Cardiac septum (tissue), 1 donor: ENCODE measurements at regions of chr11 and their contacts with region 1.

Region 1: DNA sequence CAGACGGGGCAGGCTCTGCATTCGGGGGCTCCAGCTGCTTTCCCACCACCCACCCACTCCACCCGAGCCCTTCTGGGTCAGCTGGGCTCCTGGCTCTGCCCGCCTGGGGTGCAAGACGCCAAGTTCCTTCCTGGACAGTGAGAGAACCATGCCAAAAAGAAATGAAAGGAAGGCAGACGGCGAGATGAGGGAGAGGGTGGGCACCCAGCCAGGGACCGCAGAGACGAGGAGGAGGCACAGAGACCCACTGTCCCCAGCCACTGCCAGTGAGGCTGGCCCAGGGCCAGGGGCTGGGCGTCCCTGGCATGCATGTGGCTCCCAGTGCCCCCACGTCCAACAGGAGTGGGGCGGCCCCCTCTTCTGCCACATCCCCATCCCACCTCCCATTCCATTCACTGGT is 10.8 kb upstream of the CD81 start:
- DNase-seq: no peak

Region 2: DNA sequence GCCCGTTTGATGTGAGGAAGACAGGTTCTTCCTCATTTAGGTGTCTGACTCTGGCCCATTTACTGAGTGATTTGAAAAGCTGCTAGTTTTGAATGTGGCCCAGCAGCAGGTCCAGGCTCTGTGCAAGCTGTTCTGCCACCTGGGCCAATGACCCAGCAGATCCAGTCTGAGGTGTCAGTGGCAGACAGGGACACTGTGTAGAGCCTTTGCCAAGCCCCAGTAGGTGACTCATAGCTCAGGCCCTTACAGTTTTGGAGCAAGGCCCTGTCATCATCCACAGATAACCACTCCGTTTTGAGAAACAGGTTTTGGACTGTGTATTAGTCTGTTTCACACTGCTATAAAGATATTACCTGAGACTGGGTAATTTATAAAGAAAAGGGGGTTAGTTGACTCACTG is 40.5 kb before region 1 on chr11:
- intact Hi-C with region 1: loop called (anchors 5 kb)
- DNase-seq: peak; percentile 78

Region 3: DNA sequence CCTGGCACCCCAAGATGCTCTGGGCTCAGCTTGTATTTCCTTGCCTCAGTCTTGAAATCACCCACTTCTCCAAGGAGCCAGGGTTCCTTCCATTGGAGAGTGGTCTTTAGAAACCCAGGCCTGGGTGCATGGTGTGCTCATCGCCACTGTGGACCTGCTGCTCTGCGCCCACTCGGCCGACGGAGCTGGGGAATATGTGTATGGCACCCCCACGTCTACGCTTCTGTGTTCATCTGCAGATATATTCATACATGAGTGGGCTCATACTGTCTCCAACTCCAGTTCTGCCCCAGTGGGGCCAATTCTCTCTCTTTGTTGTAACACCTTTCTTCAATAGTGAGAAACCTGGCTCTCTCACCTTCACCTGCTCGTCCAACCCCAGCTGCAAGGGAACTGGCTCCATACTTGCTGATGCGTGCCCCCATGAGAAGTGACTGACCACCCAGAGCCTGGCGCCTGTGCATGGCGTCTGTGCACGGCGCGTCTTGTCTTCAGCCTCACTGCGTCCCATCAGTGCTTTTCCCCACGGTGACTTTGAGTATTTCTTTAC is 118.4 kb after region 1 on chr11:
- intact Hi-C with region 1: no loop called
- DNase-seq: no peak